ENCODE measurements at regions of chr11 and their contacts with region 1.

Region 1: GRCh38 chr11:65569973-65570918 is at the start of gene ZNRD2:
- DNase-seq: peak; percentile 97
- ATAC-seq: peak; percentile 72
- H3K4me3 ChIP-seq: peak within 1 kb of the TSS; percentile 97 to 100
- H3K27ac ChIP-seq: peak within 1 kb of the TSS; percentile 94
- H3K4me1 ChIP-seq: peaks cover 35 to 68% of the 10 kb centered on the region in 2 experiments
- H3K27me3 ChIP-seq: no peaks in the 10 kb centered on the region
- CTCF ChIP-seq: peak in 1 of 3 experiments; percentile 29; a peak in 2 of 6 replicates
- POLR2A ChIP-seq: peak; percentile 36
- RAD21 ChIP-seq: no peak
- total RNA-seq, gene ZNRD2: 66.8 TPM

Region 2: GRCh38 chr11:65150509-65151271 is 419.6 kb before region 1 on chr11:
- CTCF ChIA-PET with region 1: no interaction called
- POLR2A ChIA-PET with region 1: no interaction called
- RAD21 ChIA-PET with region 1: no interaction called
- intact Hi-C with region 1: no loop called
- DNase-seq: peak; percentile 90
- ATAC-seq: peak; percentile 97
- H3K4me3 ChIP-seq: peak overlapping the region; percentile 20 to 29; a peak in 3 of 4 replicates
- H3K27ac ChIP-seq: peak overlapping the region; percentile 89
- H3K4me1 ChIP-seq: peaks cover 15 to 29% of the 10 kb centered on the region in 2 experiments
- H3K27me3 ChIP-seq: no peaks in the 10 kb centered on the region
- CTCF ChIP-seq: no peak
- POLR2A ChIP-seq: peak; percentile 33
- RAD21 ChIP-seq: no peak

Region 3: GRCh38 chr11:65558002-65558931 is 12.0 kb before region 1 on chr11 and contains the start of gene LTBP3:
- CTCF ChIA-PET with region 1: interaction called, 14 read pairs
- POLR2A ChIA-PET with region 1: interaction called, 17 read pairs
- RAD21 ChIA-PET with region 1: interaction called in 1 of 2 experiments, 6 read pairs
- intact Hi-C with region 1: no loop called
- DNase-seq: no peak
- ATAC-seq: peak; percentile 21
- H3K4me3 ChIP-seq: peak within 1 kb of the TSS; percentile 64 to 68
- H3K27ac ChIP-seq: peak within 1 kb of the TSS; percentile 99
- H3K4me1 ChIP-seq: peaks cover 83 to 94% of the 10 kb centered on the region in 2 experiments
- H3K27me3 ChIP-seq: no peaks in the 10 kb centered on the region
- CTCF ChIP-seq: no peak
- POLR2A ChIP-seq: no peak
- RAD21 ChIP-seq: no peak
- total RNA-seq, gene LTBP3: 248 TPM

Region 4: DNA sequence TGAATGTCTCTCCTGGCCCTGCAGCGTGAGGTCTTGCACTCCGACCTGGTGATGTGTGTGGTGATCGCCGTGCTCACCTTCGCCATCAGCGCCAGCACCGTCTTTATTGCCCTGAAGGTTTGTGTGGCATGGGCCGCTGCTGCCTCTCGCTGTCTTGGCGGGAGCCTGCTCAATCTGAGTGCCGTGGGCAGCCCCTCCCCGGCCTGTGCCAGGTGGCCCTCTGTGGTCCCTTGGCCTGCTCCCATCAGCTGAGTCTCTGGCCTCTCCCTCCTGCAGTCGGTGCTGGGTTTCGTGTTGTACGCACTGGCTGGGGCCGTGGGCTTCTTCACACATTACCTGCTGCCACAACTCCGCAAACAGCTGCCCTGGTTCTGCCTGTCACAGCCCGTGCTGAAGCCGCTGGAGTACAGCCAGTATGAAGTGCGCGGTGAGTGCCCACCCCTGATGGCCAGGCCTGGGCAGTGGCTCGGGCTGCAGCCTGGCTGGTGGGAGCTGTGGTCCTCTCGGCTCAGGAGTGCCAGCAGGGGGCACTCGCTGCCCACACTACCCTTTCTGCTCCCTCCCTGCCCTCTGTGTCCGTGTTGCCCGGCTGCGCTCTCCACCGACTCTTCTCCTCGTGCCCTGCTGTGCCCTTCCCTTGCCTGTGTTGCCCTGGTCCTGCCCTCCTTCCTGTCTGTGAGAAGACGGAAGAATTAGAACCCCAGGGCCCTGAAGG is 55.5 kb after region 1 on chr11:
- CTCF ChIA-PET with region 1: no interaction called
- POLR2A ChIA-PET with region 1: no interaction called
- RAD21 ChIA-PET with region 1: no interaction called
- intact Hi-C with region 1: no loop called
- DNase-seq: no peak
- ATAC-seq: peak; percentile 79
- H3K4me3 ChIP-seq: no peak overlapping the region
- H3K27ac ChIP-seq: no peak overlapping the region; the same call in 1 of the 2 replicates
- H3K4me1 ChIP-seq: no peaks in the 10 kb centered on the region
- H3K27me3 ChIP-seq: no peaks in the 10 kb centered on the region
- CTCF ChIP-seq: peak; percentile 49 to 60 (median 51); a peak in 5 of 6 replicates
- POLR2A ChIP-seq: no peak
- RAD21 ChIP-seq: peak; percentile 68

Region 5: DNA sequence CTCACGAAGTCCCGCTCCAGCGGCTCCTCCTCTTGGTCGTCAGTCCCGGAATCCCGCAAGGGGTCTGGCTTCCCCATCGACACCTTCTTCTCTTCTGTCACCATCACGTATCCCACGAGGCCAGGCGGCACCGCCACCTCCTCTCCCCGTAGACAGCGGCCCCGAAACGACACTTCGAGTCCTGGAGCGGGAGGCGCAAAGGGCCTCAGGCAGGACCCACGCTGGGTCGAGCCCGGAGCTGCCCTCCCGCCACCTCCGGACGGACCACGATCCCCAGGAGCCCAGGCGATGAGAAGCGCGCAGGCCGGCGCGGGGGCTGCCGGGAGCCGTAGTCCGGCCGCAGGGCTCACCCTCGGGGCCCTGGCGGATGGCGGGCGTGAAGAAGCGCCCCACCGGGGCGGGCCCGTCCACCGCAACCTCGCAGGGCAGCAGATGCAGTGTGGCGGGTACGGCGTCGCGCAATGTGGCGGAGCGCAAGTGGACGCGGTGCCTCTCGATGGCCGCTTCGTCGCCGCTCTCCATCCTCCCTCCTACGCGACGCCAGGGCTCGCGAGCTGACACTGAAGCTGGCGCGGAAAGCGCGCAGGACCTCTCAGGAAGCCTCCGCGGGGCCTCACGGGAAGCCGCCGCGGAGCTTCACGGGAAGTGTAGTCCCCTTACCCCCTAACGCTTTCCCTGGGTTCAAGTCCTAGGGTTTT is 150.1 kb after region 1 on chr11 and contains the start of gene RNASEH2C:
- CTCF ChIA-PET with region 1: no interaction called
- POLR2A ChIA-PET with region 1: no interaction called
- RAD21 ChIA-PET with region 1: no interaction called
- intact Hi-C with region 1: no loop called
- DNase-seq: peak; percentile 77
- ATAC-seq: peak; percentile 91
- H3K4me3 ChIP-seq: peak within 1 kb of the TSS; percentile 83 to 93
- H3K27ac ChIP-seq: peak within 1 kb of the TSS; percentile 82
- H3K4me1 ChIP-seq: peaks cover 5 to 10% of the 10 kb centered on the region in 2 experiments; a peak in 3 of 4 replicates
- H3K27me3 ChIP-seq: no peaks in the 10 kb centered on the region
- CTCF ChIP-seq: no peak
- POLR2A ChIP-seq: peak; percentile 88
- RAD21 ChIP-seq: no peak
- total RNA-seq, gene RNASEH2C: 28.5 TPM